PC-9 (cell line): ENCODE measurements at regions of chr16 and their contacts with region 1.

Region 1: GRCh38 chr16:19179546-19180490 is 11.8 kb downstream of the SYT17 start:
- DNase-seq: peak; percentile 56 to 63
- H3K4me3 ChIP-seq: no peak overlapping the region
- H3K27ac ChIP-seq: no peak overlapping the region
- H3K4me1 ChIP-seq: peaks cover 31% of the 10 kb centered on the region
- H3K27me3 ChIP-seq: no peaks in the 10 kb centered on the region
- CTCF ChIP-seq: peak; percentile 90

Region 2: DNA sequence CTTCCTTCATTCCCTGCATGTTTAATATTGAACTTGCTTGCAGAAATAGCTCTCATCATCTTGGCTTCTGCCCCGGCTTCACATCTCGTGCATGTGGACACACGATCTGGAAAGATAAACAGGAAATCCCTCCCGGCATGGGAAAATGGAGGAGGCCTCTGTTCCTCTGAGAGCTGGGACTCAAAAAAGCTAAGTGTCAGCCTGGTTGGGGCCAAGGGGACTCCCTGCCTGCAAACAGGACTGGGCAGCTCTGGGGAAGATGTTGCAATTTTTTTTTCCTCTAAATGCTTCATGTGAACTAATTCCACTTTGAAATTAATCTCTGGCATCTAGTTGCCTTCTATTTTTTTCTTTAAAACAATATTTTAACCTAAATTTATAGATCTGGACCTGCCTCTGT is 41.2 kb before region 1 on chr16:
- CTCF ChIA-PET with region 1: no interaction called
- POLR2A ChIA-PET with region 1: no interaction called
- intact Hi-C with region 1: no loop called
- DNase-seq: peak; percentile 82 to 84
- H3K4me3 ChIP-seq: no peak overlapping the region
- H3K27ac ChIP-seq: peak overlapping the region; percentile 92; the same call in 1 of the 2 replicates
- H3K4me1 ChIP-seq: peaks cover 59% of the 10 kb centered on the region
- H3K27me3 ChIP-seq: no peaks in the 10 kb centered on the region
- CTCF ChIP-seq: no peak

Region 3: DNA sequence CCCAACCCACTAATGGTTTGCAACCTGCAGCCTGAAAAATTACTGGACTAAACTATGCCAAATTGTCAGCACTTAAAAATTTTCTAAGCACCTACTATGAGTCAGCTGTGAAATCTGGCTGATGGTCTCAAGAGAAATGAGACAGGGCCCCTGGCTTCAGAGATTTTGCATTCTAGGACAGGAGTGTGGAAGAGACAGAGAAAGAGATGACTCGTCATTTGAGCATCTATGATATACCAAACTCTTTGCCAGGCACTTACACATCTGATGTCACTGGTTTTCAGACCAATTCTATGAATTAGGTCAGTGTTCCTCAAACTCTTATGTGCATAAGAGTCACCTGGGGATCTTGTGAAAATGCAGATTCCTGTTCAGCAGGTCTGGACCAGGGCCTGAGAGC is 150.1 kb after region 1 on chr16:
- CTCF ChIA-PET with region 1: interaction called, 12 read pairs
- POLR2A ChIA-PET with region 1: no interaction called
- intact Hi-C with region 1: no loop called
- DNase-seq: peak; percentile 19 to 67
- H3K4me3 ChIP-seq: no peak overlapping the region
- H3K27ac ChIP-seq: peak overlapping the region; percentile 73
- H3K4me1 ChIP-seq: peaks cover 21% of the 10 kb centered on the region
- H3K27me3 ChIP-seq: no peaks in the 10 kb centered on the region
- CTCF ChIP-seq: no peak

Region 4: GRCh38 chr16:19393226-19394074 is 213.6 kb after region 1 on chr16:
- CTCF ChIA-PET with region 1: no interaction called
- POLR2A ChIA-PET with region 1: no interaction called
- intact Hi-C with region 1: no loop called
- DNase-seq: peak; percentile 81 to 99
- H3K4me3 ChIP-seq: peak overlapping the region; percentile 53
- H3K27ac ChIP-seq: peak overlapping the region; percentile 97
- H3K4me1 ChIP-seq: peaks cover 56% of the 10 kb centered on the region
- H3K27me3 ChIP-seq: no peaks in the 10 kb centered on the region
- CTCF ChIP-seq: no peak